ENCODE measurements at regions of chr22 and their contacts with region 1.

Region 1: DNA sequence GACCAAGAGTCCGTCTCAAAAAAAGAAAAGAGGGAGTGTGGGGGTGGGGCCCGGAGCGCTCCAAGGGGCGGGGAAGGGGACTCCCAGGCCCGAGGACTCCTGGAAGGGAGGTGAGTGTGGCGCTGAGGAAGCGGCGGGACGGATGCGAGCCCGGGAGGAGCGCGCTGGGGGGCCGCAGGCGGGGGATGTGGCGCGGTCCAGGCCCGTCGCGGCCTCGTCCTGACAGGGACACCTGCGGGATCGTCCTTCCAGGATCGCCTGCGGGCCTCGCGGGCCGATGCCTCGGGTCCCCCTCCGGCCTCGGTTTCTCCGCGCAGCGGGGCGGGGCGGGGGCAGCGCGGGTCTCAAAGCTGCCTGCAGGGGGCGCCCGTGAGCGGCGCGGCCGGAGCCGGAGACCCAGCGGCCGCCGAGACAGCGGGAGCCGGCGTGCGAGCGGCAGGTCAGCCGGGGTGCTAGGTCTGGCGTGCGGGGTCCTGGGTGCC is 3.8 kb upstream of the ADORA2A start:
- DNase-seq: peak; percentile 46
- H3K4me3 Mint-ChIP-seq: peak overlapping the region; percentile 52
- H3K27ac Mint-ChIP-seq: no peak overlapping the region
- H3K4me1 Mint-ChIP-seq: peaks cover 38% of the 10 kb centered on the region
- H3K27me3 Mint-ChIP-seq: peaks cover 8% of the 10 kb centered on the region

Region 2: DNA sequence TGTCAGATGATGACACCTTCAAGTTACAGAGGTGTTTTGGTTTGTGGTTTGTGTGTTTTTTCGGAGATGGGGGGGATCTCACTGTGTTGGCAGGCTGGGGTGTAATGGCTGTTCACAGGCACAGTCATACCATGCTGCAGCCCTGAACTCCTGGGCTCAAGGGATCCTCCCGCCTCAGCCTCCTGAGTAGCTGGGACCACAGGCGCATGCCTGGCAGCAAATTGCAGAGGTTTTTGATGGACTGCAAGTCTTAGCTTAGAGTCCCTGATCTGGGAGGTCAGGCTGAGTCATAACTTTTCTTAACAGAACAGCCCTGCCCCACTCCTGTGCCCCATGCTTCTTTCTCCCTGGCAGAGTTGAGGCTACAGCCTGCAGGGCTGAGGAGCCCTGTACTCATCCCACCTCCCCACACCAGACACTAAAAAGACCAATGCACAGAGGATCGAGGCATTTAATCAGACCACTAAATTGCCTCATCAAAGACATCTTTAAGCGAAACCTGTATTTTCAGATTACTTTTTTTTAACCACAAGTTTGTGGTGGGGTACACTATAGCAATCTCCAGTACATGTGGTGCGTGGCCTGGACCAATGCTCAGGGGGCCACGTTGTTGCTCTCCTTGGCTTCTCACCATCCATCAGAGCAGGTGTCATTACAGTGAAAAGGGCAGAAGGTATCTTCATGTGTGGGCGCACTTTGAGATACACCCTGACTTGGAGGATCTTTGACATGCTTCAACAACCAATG is 13.3 kb before region 1 on chr22:
- CTCF ChIA-PET with region 1: interaction called, 18 read pairs
- POLR2A ChIA-PET with region 1: no interaction called
- DNase-seq: no peak
- H3K4me3 Mint-ChIP-seq: no peak overlapping the region
- H3K27ac Mint-ChIP-seq: peak overlapping the region; percentile 78
- H3K4me1 Mint-ChIP-seq: peaks cover 39% of the 10 kb centered on the region
- H3K27me3 Mint-ChIP-seq: no peaks in the 10 kb centered on the region

Region 3: GRCh38 chr22:24451162-24451561 is 27.6 kb after region 1 on chr22:
- CTCF ChIA-PET with region 1: no interaction called
- POLR2A ChIA-PET with region 1: no interaction called
- DNase-seq: no peak
- H3K4me3 Mint-ChIP-seq: no peak overlapping the region
- H3K27ac Mint-ChIP-seq: no peak overlapping the region
- H3K4me1 Mint-ChIP-seq: peaks cover 2% of the 10 kb centered on the region
- H3K27me3 Mint-ChIP-seq: no peaks in the 10 kb centered on the region

Region 4: DNA sequence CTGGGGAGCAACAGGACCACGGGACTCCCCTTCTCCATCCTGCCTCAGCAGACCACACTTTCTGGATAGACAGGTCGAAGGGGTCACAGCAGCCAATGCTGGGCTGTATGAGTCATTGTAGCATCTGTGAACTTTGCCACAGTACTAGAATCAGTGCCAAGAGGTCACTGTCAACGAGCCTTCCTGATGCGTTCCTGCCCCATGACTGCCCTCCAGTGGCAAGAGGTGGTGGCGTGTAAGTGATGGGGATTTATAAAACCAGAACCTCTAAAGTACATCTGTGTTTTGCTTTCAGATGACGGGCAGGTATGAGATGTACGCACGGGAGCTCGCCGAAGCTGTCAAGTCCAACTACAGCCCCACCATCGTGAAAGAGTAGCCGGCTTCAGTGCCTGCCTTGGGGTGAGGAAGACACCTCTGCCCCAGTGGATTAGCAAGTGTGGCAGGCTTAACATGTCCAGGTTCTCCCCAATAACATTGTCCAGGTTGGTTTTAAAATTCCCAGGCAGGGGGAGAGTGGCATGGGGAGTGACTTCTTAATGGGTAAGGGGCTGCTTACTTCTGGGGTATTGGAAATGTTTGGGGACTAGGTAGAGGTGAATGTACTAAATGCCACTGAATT is 102.0 kb after region 1 on chr22:
- CTCF ChIA-PET with region 1: interaction called, 10 read pairs
- POLR2A ChIA-PET with region 1: no interaction called
- DNase-seq: peak; percentile 88
- H3K4me3 Mint-ChIP-seq: no peak overlapping the region
- H3K27ac Mint-ChIP-seq: no peak overlapping the region
- H3K4me1 Mint-ChIP-seq: peaks cover 13% of the 10 kb centered on the region
- H3K27me3 Mint-ChIP-seq: peaks cover 4% of the 10 kb centered on the region

Measured in activated CD4-positive, alpha-beta T cell treated with anti-CD3 and anti-CD28 coated beads, Interleukin-2, amount 10 ng/mL, durations not matched to agents 7 days and 5 days (primary cell).